Mammary epithelial cell (primary cell): ENCODE measurements at regions of chr1 and their contacts with region 1.

Region 1: DNA sequence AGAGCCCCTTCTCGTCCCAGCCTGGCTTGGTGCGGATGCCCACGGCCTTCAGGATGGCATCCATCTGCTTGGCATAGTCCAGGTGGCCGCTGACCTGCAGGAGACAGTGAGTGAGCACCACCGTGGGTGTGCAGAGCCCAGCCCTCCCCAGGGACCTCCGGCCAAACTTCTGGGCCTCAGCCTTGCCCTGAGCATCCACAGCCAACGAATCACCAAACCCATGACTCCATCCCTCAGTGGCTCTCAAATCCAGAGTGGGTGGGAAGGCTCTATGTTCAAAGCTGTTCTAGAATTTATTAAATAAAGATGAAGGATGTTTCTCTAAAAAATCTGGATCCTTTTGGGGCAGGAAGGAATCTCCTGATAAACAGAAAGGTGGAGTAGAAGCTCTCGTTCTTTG is 18.7 kb downstream of the HTR6 start:
- DNase-seq: no peak
- H3K4me3 ChIP-seq: no peak overlapping the region
- H3K27ac ChIP-seq: no peak overlapping the region
- H3K4me1 ChIP-seq: no peaks in the 10 kb centered on the region
- H3K27me3 ChIP-seq: no peaks in the 10 kb centered on the region
- CTCF ChIP-seq: no peak

Region 2: GRCh38 chr1:19405761-19406487 is 277.4 kb before region 1 on chr1:
- CTCF ChIA-PET with region 1: no interaction called
- dilution Hi-C with region 1: no loop called
- in situ Hi-C with region 1: no loop called
- intact Hi-C with region 1: no loop called
- DNase-seq: no peak
- H3K4me3 ChIP-seq: no peak overlapping the region
- H3K27ac ChIP-seq: no peak overlapping the region
- H3K4me1 ChIP-seq: no peaks in the 10 kb centered on the region
- H3K27me3 ChIP-seq: no peaks in the 10 kb centered on the region
- CTCF ChIP-seq: no peak

Region 3: GRCh38 chr1:19791546-19791945 is 108.2 kb after region 1 on chr1:
- CTCF ChIA-PET with region 1: interaction called, 28 read pairs
- dilution Hi-C with region 1: no loop called
- in situ Hi-C with region 1: no loop called
- intact Hi-C with region 1: no loop called
- DNase-seq: no peak
- H3K4me3 ChIP-seq: no peak overlapping the region
- H3K27ac ChIP-seq: no peak overlapping the region
- H3K4me1 ChIP-seq: no peaks in the 10 kb centered on the region
- H3K27me3 ChIP-seq: no peaks in the 10 kb centered on the region
- CTCF ChIP-seq: no peak